Activated CD4-positive, alpha-beta memory T cell treated with anti-CD3 and anti-CD28 coated beads, Interleukin-2, amount 10 ng/mL, durations not matched to agents 7 days and 5 days (primary cell): ENCODE measurements at regions of chr4 and their contacts with region 1.

Region 1: DNA sequence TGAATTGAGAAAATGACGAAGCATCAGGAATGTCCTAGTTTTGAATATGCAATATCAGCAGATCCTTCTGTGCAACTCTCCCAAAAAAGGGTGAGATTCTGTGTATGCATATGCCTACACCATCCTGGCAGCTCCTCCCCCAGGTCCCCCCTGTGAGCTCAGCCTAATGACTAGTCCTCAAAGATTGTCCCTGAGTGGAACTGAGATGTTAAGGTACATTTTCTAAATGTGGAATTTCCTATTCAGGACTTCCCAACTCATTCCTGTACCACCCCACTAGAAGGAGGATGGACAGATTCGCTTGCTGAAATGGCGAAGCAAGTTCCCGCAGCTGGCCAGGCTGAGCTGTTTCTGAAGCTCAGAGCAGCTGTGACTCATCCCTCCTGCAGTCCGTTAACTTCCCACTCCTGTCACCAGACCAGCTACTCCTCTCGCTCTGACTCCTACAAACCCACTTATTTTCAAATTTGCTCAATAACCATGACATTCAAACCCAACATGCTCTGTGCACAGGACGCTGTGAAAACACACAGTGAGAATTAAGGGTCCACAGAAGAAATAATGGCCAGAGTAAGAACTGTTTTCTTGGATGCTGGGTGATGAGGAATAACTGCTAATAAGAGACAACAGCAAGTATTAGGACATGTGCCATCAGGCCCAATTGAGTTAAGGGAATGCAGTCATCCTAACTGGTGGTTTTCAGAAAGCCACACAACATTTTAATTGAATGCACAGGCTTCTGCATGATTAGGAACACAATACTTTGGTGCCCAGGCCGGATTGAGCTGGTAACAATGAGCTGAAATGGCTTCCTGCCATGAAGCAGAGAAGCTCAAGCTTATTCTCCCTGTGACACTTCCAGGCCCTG is 40.0 kb upstream of the IRF2 start:
- DNase-seq: peak; percentile 71
- H3K4me3 Mint-ChIP-seq: peak overlapping the region; percentile 32
- H3K27ac Mint-ChIP-seq: peak overlapping the region; percentile 89
- H3K4me1 Mint-ChIP-seq: peaks cover 47% of the 10 kb centered on the region
- H3K27me3 Mint-ChIP-seq: no peaks in the 10 kb centered on the region

Region 2: GRCh38 chr4:184526228-184526627 is 11.9 kb after region 1 on chr4:
- CTCF ChIA-PET with region 1: interaction called, 11 read pairs
- POLR2A ChIA-PET with region 1: interaction called, 96 read pairs
- DNase-seq: no peak
- H3K4me3 Mint-ChIP-seq: no peak overlapping the region
- H3K27ac Mint-ChIP-seq: no peak overlapping the region
- H3K4me1 Mint-ChIP-seq: peaks cover 9% of the 10 kb centered on the region
- H3K27me3 Mint-ChIP-seq: peaks cover 2% of the 10 kb centered on the region